GM10248 (cell line): ENCODE measurements at regions of chr14 and their contacts with region 1.

Region 1: GRCh38 chr14:50038398-50039119 is 77.8 kb downstream of the VCPKMT start:
- DNase-seq: peak; percentile 81
- CTCF ChIP-seq: no peak

Region 2: DNA sequence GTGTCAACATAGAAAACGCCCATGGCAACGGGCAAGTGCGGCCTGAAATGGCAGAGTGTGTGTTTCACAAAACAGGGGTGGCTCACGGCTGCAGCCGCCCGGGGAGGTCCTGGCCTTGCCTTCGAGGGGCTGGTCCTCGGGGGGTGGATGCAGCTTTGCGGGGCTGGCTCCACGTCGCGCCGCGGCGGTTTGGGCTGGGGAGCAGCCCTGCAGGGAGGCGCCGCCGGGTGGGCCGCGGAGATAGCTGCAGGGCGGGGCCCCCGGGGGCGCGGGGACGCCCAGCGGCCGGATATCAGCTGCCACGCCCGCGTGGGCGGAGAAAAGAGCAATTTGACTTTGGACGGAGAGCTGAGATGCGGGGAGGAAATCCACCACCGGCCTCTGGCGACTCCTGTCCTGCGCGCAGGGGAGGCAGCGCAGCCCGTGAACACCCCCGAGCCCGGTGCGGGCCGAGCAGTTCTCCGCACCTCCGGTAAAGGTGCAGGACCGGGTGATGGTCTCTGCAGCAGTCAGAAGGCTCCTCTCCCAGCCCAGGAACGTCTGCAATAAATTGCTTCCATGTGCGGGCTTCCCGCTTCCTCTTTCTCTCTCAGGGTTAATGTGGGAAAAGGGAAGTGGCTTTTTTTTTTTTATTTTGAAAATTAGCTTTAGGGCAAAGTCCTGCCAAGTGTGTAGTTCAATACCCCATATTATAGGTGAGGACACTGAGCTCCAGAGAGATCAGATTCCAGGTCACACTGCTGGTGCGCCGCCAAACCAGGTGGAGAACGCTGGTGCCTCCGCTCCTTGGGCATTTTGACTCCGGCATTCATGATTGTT is 35.1 kb before region 1 on chr14:
- CTCF ChIA-PET with region 1: interaction called, 6 read pairs
- POLR2A ChIA-PET with region 1: interaction called, 10 read pairs
- DNase-seq: peak; percentile 90
- CTCF ChIP-seq: peak; percentile 15

Region 3: DNA sequence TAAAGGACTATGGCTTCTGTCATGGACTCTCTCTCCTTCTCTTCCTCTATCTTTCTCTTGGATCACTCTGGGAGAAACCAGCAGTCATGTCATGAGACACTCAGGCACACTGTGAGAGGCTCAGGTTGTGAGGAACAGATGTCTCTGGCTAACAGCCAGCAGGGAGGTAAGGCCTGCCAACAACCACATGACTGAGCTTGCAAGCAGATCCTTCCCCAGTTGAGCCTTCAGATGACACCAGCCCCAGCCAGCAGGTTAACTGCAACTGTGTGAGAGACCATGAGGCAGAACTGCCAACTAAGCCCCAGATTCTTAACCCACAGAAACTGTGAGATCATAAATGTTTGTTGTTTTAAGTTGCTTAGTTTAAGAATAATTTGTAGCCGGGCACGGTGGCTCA is 12.8 kb before region 1 on chr14:
- CTCF ChIA-PET with region 1: interaction called, 11 read pairs
- POLR2A ChIA-PET with region 1: no interaction called
- DNase-seq: no peak
- CTCF ChIP-seq: no peak

Region 4: GRCh38 chr14:50085570-50086320 is 47.2 kb after region 1 on chr14:
- CTCF ChIA-PET with region 1: interaction called, 17 read pairs
- POLR2A ChIA-PET with region 1: interaction called, 5 read pairs
- DNase-seq: peak; percentile 69
- CTCF ChIP-seq: no peak

Region 5: GRCh38 chr14:50103558-50103957 is 65.0 kb after region 1 on chr14:
- CTCF ChIA-PET with region 1: interaction called, 12 read pairs
- POLR2A ChIA-PET with region 1: interaction called, 17 read pairs
- DNase-seq: no peak
- CTCF ChIP-seq: no peak